CD8-positive, alpha-beta memory T cell (primary cell): ENCODE measurements at regions of chr11 and their contacts with region 1.

Region 1: DNA sequence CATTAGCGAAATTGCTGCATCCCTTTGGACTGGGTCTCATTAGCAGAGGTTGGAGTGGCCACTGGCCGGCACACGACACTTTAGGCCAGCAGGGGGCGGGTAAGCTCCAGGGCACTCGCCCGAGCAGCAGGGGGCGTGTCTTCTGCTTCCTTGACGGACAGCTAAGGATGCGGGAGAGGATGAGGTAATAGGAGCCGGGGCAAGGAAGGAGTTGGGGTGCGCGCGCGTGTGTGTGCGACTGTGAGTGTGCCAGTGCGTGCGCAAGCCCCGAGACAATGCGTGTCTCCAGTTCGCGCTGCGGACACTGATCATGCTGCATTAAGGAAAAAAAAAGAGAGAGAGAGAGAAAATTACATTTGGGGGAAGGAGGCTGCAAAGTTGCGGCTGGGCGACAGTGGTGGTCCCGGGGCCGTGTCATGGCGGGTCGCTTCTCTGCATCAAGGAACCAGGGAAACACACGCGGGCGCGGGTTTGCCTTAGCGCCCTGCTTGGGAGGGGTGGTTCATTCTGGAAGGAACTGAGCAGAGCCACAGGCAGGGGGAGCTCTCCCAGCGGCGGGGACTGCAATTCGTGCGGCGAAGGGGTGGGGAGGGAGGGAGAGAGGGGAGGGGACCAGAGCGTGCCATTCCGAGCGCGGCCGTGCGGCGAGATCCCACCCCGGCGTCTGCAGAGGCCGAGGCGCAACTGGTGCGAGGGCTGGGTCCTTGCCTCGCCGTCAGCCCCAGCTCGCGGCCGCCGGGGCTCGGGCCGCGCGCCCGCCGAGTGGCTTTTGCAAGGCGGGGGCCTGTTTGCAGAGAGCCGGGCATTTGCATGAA is at the start of gene DTX4:
- DNase-seq: peak; percentile 81 to 91 (median 86)
- H3K4me3 ChIP-seq: peak within 1 kb of the TSS; percentile 80
- H3K4me3 Mint-ChIP-seq: peak within 1 kb of the TSS; percentile 82 to 92 (median 91)
- H3K27ac ChIP-seq: peak within 1 kb of the TSS; percentile 49
- H3K27ac Mint-ChIP-seq: peak within 1 kb of the TSS in 6 of 8 donors; percentile 21 to 73 (median 51)
- H3K4me1 ChIP-seq: peaks cover 9% of the 10 kb centered on the region
- H3K4me1 Mint-ChIP-seq: peaks cover 7 to 10% (median 8%) of the 10 kb centered on the region in 3 donors
- H3K27me3 ChIP-seq: peaks cover 9% of the 10 kb centered on the region
- H3K27me3 Mint-ChIP-seq: peaks cover 3 to 7% of the 10 kb centered on the region in 2 donors
- total RNA-seq, gene DTX4: 0.24 to 0.38 TPM

Region 2: GRCh38 chr11:59142530-59143507 is 28.9 kb before region 1 on chr11 and contains the start of gene FAM111A:
- CTCF ChIA-PET with region 1: interaction called, 15 read pairs
- POLR2A ChIA-PET with region 1: interaction called, 3 read pairs
- DNase-seq: peak; percentile 85 to 93 (median 90)
- H3K4me3 ChIP-seq: peak within 1 kb of the TSS; percentile 89
- H3K4me3 Mint-ChIP-seq: peak within 1 kb of the TSS; percentile 95 to 99 (median 97)
- H3K27ac ChIP-seq: peak within 1 kb of the TSS; percentile 89
- H3K27ac Mint-ChIP-seq: peak within 1 kb of the TSS; percentile 92 to 99 (median 96)
- H3K4me1 ChIP-seq: peaks cover 30% of the 10 kb centered on the region
- H3K4me1 Mint-ChIP-seq: peaks cover 44 to 67% (median 63%) of the 10 kb centered on the region in 3 donors
- H3K27me3 ChIP-seq: no peaks in the 10 kb centered on the region
- H3K27me3 Mint-ChIP-seq: no peaks in the 10 kb centered on the region
- total RNA-seq, gene FAM111A: 71.1 to 73.5 TPM

Region 3: DNA sequence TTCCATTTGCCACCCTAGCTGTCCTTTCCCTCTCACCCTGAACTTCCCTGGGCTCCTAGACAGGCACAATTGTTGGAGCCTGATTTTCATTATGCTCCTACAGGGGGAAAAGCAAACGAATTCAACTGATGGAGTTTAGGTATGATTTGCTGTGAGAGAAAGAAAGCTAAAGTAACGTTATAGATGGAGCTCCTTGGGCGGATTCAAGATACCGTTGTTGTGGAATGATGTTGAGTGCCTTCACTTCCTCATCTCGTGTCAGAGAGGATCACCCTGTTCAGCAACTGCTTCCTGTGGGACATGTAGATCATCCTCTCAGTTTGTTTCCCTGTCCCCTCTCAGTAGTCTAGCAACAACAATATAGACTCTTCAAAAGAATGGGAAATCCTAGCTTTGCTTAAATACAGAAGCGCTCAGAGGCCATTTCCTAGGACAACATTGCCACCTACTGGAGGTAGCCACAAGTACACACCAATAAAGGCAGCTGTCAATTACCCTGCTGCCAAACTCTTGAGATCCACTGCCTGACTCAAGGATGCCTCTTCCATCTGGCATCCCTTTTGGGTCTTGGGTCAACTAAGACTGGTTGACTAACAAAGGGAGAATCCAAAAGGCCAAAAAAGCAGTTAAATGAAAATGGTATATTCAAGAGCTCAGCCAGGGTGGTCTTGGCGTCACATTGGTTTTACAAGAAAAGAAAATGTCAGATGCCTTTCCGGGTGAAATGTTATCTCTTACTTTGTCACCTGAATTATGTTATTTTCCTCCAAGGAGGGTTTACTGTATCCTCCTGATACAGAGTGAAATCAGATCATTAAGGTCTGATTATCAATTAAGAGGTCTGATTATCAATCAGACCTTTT is 13.3 kb before region 1 on chr11:
- CTCF ChIA-PET with region 1: interaction called, 29 read pairs
- POLR2A ChIA-PET with region 1: no interaction called
- DNase-seq: peak; percentile 27 to 74 (median 60)
- H3K4me3 ChIP-seq: no peak overlapping the region
- H3K4me3 Mint-ChIP-seq: no peak overlapping the region
- H3K27ac ChIP-seq: no peak overlapping the region
- H3K27ac Mint-ChIP-seq: peak overlapping the region in 4 of 8 donors; percentile 21 to 77 (median 68)
- H3K4me1 ChIP-seq: no peaks in the 10 kb centered on the region
- H3K4me1 Mint-ChIP-seq: peaks cover 2 to 5% (median 5%) of the 10 kb centered on the region in 3 donors
- H3K27me3 ChIP-seq: peaks cover 3% of the 10 kb centered on the region
- H3K27me3 Mint-ChIP-seq: peaks cover 4 to 18% of the 10 kb centered on the region in 2 donors

Region 4: DNA sequence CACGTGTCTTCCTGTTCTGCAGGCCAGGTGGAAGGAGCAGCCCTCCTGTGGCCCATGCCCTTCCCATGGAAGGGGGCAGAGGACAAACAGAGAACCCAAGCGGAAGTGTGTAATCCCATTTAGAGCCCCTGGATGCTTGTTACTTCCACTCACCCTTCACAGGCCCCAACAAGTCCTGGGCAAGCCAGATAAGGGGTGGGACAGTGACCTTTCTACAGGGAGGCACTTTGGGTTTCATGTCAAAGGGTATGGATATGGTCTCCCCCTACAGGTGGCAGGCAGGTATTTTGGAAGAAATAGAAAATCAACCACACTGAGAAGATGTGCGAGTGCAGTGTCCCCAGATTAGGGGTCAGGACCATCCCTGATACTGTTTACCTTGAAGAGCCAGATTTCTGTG is 29.6 kb after region 1 on chr11:
- CTCF ChIA-PET with region 1: interaction called, 19 read pairs
- POLR2A ChIA-PET with region 1: no interaction called
- DNase-seq: no peak
- H3K4me3 ChIP-seq: no peak overlapping the region
- H3K4me3 Mint-ChIP-seq: no peak overlapping the region
- H3K27ac ChIP-seq: no peak overlapping the region
- H3K27ac Mint-ChIP-seq: peak overlapping the region in 1 of 8 donors; percentile 24
- H3K4me1 ChIP-seq: no peaks in the 10 kb centered on the region
- H3K4me1 Mint-ChIP-seq: peaks cover 0 to 7% (median 0%) of the 10 kb centered on the region in 3 donors
- H3K27me3 ChIP-seq: no peaks in the 10 kb centered on the region
- H3K27me3 Mint-ChIP-seq: peaks cover 4 to 5% of the 10 kb centered on the region in 2 donors

Region 5: GRCh38 chr11:59429924-59430516 is 258.3 kb after region 1 on chr11:
- CTCF ChIA-PET with region 1: interaction called, 18 read pairs
- POLR2A ChIA-PET with region 1: no interaction called
- DNase-seq: peak in 2 of 5 donors; percentile 29 to 56
- H3K4me3 ChIP-seq: no peak overlapping the region
- H3K4me3 Mint-ChIP-seq: no peak overlapping the region
- H3K27ac ChIP-seq: no peak overlapping the region
- H3K27ac Mint-ChIP-seq: no peak overlapping the region
- H3K4me1 ChIP-seq: no peaks in the 10 kb centered on the region
- H3K4me1 Mint-ChIP-seq: no peaks in the 10 kb centered on the region
- H3K27me3 ChIP-seq: no peaks in the 10 kb centered on the region
- H3K27me3 Mint-ChIP-seq: peaks cover 3 to 15% of the 10 kb centered on the region in 2 donors